ENCODE measurements at regions of chr15 and their contacts with region 1.

Region 1: GRCh38 chr15:85407804-85408746 is 27.7 kb downstream of the AKAP13 start:
- DNase-seq: no peak
- ATAC-seq: peak; percentile 76
- H3K4me3 ChIP-seq: 0 out of 4 replicates have a peak overlapping the region, but pooled peaks of 1 of the 2 experiments have one; percentile 1
- H3K27ac ChIP-seq: peak overlapping the region; percentile 76
- H3K4me1 ChIP-seq: peaks cover 70% of the 10 kb centered on the region
- H3K27me3 ChIP-seq: no peaks in the 10 kb centered on the region
- CTCF ChIP-seq: no peak

Region 2: DNA sequence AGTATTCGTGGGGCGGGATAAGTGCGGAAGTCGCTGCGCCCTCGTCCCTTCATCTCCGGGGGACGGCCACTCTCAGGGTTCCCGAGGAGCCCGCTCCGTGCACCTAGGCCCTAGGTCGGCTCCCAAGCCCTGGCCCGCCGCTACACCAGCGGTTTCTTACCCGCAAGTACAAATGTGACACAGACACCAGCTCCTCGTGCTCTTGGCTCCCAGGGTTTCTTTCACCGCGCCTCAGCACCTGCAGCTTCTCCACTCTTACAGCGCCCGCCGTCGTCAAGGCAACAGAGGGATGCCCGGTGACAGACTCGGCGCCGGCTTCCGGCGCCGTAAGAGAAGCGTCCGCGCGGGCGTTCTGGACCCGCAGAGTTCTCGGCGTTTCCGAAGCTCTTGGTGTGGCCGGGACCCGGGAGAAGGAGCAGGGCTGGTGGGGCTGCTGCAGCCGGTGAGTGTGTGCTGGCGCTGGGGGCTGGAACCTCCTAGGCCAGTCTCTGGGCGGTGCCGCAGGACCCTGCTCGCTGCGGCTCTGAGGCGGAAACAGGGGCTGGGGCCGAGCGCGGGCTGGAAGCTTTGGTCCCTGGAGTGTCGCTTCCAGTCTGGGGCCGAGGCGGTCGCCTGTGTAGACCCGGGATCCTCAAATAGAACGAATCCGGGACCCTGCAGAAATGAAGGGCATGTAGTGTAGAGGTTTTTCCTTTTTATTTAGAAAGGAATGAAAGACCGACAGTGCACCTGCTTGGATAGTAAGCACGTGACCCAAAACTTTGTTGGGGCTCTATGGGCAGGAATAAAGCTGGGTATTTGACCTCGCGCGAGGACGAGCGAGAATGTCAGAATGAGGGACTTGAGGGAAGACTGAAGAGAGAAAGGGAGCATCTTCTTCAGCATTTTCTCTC is 1327.9 kb before region 1 on chr15:
- CTCF ChIA-PET with region 1: no interaction called
- POLR2A ChIA-PET with region 1: no interaction called
- in situ Hi-C with region 1: no loop called
- intact Hi-C with region 1: no loop called
- DNase-seq: no peak
- ATAC-seq: peak; percentile 78
- H3K4me3 ChIP-seq: peak overlapping the region; percentile 29 to 35
- H3K27ac ChIP-seq: no peak overlapping the region
- H3K4me1 ChIP-seq: no peaks in the 10 kb centered on the region
- H3K27me3 ChIP-seq: no peaks in the 10 kb centered on the region
- CTCF ChIP-seq: no peak

Region 3: GRCh38 chr15:85394552-85395333 is 13.3 kb before region 1 on chr15:
- CTCF ChIA-PET with region 1: no interaction called
- POLR2A ChIA-PET with region 1: interaction called, 14 read pairs
- in situ Hi-C with region 1: no loop called
- intact Hi-C with region 1: no loop called
- DNase-seq: no peak
- ATAC-seq: peak; percentile 43; the same call in 1 of the 2 replicates
- H3K4me3 ChIP-seq: no peak overlapping the region
- H3K27ac ChIP-seq: peak overlapping the region; percentile 18
- H3K4me1 ChIP-seq: peaks cover 34% of the 10 kb centered on the region
- H3K27me3 ChIP-seq: no peaks in the 10 kb centered on the region
- CTCF ChIP-seq: no peak